SK-N-SH (cell line): ENCODE measurements at regions of chr17 and their contacts with region 1.

Region 1: DNA sequence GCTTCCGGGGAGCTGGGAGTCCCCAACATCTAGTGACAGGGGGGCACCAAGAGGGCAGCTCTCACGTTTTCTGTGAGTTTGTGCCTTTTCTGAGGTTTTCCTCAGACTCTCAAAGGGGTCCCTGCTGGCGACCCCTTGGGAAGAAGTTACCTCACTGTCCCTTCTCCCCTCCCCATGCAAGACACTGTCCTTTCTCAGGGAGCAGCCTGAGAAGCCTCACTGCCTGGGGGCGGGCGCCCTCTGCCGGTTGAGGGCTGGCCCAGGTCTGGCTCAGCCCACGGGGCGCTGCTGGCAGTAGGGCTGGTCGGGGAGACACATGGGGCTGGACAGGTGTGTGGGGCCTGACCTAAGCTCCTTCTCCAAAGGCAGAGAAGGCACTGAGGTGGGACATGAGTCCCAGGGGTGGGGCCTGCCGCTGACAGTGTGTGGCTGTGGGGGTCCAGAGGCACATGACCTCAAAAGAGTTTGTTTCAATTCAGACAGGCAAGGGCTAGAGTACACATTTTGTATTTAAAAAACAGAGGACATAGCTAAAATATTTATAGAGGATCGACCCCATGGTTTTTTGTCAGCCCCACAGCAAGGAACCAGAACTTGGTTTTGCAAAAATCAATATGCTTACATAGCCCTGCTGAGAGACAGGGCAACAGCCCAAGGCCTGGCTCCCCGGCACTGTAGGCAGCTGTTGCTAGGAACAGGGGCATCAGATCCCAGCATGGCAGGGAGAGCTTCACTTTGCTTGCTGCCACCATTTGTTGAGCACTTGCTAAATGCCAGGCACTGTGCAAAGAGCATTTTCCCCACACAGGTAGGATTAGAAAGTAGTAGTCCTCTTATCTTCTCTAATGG is 18.5 kb upstream of the ALDH3A1 start:
- DNase-seq: peak; percentile 87
- H3K4me3 ChIP-seq: peak overlapping the region in 1 of 2 experiments; percentile 46; a peak in 1 of 4 replicates
- H3K27ac ChIP-seq: no peak overlapping the region
- H3K4me1 ChIP-seq: peaks cover 2 to 3% of the 10 kb centered on the region in 2 experiments; a peak in 2 of 4 replicates
- H3K27me3 ChIP-seq: no peaks in the 10 kb centered on the region
- CTCF ChIP-seq: peak; percentile 96
- EP300 ChIP-seq: no peak
- RAD21 ChIP-seq: peak; percentile 95

Region 2: GRCh38 chr17:19362277-19363113 is 404.2 kb before region 1 on chr17 and contains the start of gene B9D1:
- CTCF ChIA-PET with region 1: interaction called, 35 read pairs
- POLR2A ChIA-PET with region 1: interaction called, 3 read pairs
- DNase-seq: peak; percentile 99
- H3K4me3 ChIP-seq: peak within 1 kb of the TSS; percentile 72 to 75
- H3K27ac ChIP-seq: peak within 1 kb of the TSS; percentile 83 to 88
- H3K4me1 ChIP-seq: peaks cover 13 to 32% of the 10 kb centered on the region in 2 experiments; a peak in 2 of 4 replicates
- H3K27me3 ChIP-seq: no peaks in the 10 kb centered on the region
- CTCF ChIP-seq: peak; percentile 89
- EP300 ChIP-seq: no peak; a peak in 1 of 4 replicates
- RAD21 ChIP-seq: peak; percentile 97
- polyA plus RNA-seq, gene B9D1: 75.0 and 81.6 TPM in 2 replicates

Region 3: DNA sequence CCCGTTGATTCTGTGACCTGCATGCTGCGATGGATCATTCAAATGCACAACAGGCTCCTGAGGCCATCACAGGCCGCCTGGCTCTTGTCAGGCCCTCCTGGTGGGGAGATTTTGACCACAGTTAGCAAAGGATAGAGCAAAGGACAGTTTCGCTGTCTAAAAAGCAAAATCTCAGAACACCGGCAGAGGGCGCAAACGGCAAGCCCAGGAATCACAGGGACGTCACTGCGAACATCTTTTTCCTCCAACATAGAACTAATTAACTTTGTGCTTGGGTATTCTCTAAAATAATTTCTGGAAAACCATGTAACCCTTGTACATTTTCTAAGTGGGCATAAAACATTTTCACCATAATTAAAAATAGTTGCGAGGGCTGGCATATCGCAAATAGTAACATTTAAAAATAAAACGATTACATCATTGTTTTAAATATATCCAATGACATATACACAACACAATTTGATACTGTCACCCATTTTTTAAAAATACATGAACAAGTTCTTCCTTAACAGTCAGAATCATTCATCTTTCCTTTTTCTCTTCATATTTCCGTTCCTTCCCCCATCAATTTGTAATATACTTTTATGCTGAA is 252.7 kb before region 1 on chr17:
- CTCF ChIA-PET with region 1: interaction called, 292 read pairs
- POLR2A ChIA-PET with region 1: no interaction called
- DNase-seq: peak; percentile 74
- H3K4me3 ChIP-seq: no peak overlapping the region; a peak in 1 of 4 replicates
- H3K27ac ChIP-seq: peak overlapping the region in 1 of 2 experiments; percentile 16; a peak in 1 of 4 replicates
- H3K4me1 ChIP-seq: peaks cover 0 to 5% of the 10 kb centered on the region in 2 experiments; a peak in 1 of 4 replicates
- H3K27me3 ChIP-seq: no peaks in the 10 kb centered on the region
- CTCF ChIP-seq: peak; percentile 97
- EP300 ChIP-seq: no peak
- RAD21 ChIP-seq: peak; percentile 98

Region 4: DNA sequence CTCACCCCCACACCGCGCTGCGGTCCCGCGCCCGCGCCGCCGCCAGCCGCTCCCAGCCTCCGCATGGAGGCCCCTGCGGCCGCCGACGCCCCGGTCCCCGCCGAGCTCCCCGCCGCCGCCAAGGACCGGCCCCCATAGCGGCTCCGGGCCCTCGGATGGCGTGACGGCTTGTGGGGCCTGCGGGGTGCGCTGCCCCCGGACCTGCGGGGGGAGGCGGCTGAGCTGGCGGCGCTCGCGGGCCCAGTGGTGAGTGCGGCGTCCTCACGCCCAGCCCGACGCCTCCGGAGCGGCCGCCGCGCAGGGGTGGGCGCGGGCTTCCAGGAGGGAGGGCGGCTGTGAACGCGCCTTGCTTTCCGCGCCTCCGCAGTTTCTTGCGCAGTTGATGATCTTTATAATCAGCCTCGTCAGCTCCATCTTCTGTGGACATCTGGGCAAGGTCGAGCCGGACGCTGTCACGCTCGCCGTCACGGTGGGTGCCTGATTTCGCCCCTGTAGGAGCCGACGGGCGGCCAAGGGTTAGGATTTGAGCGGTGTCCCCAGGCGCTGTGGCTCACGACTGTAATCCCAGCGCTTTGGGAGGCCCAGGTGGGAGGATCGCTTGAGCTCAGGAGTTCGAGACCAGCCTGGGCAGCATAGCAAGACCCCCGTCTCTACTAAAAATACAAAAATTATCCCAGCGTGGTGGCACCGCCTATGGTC is 186.6 kb before region 1 on chr17:
- CTCF ChIA-PET with region 1: interaction called, 20 read pairs
- POLR2A ChIA-PET with region 1: no interaction called
- DNase-seq: peak; percentile 78
- H3K4me3 ChIP-seq: peak overlapping the region; percentile 47 to 50
- H3K27ac ChIP-seq: no peak overlapping the region
- H3K4me1 ChIP-seq: peaks cover 0 to 16% of the 10 kb centered on the region in 2 experiments; a peak in 1 of 4 replicates
- H3K27me3 ChIP-seq: no peaks in the 10 kb centered on the region
- CTCF ChIP-seq: no peak
- EP300 ChIP-seq: no peak
- RAD21 ChIP-seq: no peak

Region 5: GRCh38 chr17:19703106-19703827 is 63.4 kb before region 1 on chr17:
- CTCF ChIA-PET with region 1: interaction called, 10 read pairs
- POLR2A ChIA-PET with region 1: no interaction called
- DNase-seq: no peak
- H3K4me3 ChIP-seq: no peak overlapping the region
- H3K27ac ChIP-seq: peak overlapping the region in 1 of 2 experiments; percentile 12; a peak in 1 of 4 replicates
- H3K4me1 ChIP-seq: peaks cover 8 to 16% of the 10 kb centered on the region in 2 experiments; a peak in 1 of 4 replicates
- H3K27me3 ChIP-seq: no peaks in the 10 kb centered on the region
- CTCF ChIP-seq: no peak
- EP300 ChIP-seq: no peak
- RAD21 ChIP-seq: no peak

Region 6: DNA sequence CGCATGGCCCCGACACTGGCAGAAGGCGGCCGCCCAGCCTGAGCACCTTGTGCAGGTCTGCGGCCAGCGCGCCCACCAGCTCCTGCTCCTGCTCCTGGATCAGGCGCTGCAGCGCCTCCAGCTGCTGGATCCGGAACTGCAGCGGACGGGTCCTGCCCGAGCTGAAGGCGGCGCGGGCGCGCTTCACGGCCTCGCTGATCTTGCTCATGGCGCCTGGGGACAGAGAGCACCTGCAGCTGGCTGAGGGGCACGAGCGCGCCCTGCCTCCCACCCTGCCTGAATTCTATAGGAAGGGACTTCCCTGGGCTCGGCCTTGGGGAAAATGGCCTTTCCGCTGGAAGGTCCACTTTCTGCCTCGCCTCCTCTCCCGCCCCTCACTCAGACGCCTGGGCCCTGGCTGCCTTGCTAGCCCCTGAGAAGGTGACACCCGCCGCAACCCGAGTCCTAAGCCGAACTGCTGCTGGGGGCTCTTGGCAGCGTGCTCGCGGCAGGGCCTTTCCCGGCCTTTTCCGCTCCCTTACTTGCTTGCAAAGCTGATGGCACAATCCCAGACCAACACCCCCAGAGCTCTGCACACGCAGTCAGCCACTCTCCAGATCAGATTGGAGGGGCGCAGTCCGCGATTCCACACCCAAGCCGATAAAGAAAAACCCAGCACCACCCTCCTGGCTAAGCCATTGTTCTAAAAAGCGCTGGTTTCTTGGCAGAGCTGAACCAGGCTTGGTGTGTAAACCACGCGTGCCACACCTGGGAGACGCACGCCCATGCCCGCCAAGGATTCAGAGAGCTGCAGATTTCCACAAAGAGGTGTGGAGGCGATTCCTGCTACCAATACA is 21.5 kb before region 1 on chr17:
- CTCF ChIA-PET with region 1: interaction called, 55 read pairs
- POLR2A ChIA-PET with region 1: interaction called, 5 read pairs
- DNase-seq: peak; percentile 95
- H3K4me3 ChIP-seq: peak overlapping the region in 1 of 2 experiments; percentile 47; a peak in 3 of 4 replicates
- H3K27ac ChIP-seq: no peak overlapping the region; a peak in 1 of 4 replicates
- H3K4me1 ChIP-seq: peaks cover 0 to 6% of the 10 kb centered on the region in 2 experiments; a peak in 1 of 4 replicates
- H3K27me3 ChIP-seq: no peaks in the 10 kb centered on the region
- CTCF ChIP-seq: peak; percentile 70
- EP300 ChIP-seq: no peak
- RAD21 ChIP-seq: peak; percentile 65

Region 7: GRCh38 chr17:19781488-19782458 is 15.1 kb after region 1 on chr17:
- CTCF ChIA-PET with region 1: interaction called, 63 read pairs
- POLR2A ChIA-PET with region 1: no interaction called
- DNase-seq: no peak
- H3K4me3 ChIP-seq: no peak overlapping the region
- H3K27ac ChIP-seq: no peak overlapping the region
- H3K4me1 ChIP-seq: no peaks in the 10 kb centered on the region
- H3K27me3 ChIP-seq: no peaks in the 10 kb centered on the region
- CTCF ChIP-seq: no peak
- EP300 ChIP-seq: no peak
- RAD21 ChIP-seq: no peak

Region 8: DNA sequence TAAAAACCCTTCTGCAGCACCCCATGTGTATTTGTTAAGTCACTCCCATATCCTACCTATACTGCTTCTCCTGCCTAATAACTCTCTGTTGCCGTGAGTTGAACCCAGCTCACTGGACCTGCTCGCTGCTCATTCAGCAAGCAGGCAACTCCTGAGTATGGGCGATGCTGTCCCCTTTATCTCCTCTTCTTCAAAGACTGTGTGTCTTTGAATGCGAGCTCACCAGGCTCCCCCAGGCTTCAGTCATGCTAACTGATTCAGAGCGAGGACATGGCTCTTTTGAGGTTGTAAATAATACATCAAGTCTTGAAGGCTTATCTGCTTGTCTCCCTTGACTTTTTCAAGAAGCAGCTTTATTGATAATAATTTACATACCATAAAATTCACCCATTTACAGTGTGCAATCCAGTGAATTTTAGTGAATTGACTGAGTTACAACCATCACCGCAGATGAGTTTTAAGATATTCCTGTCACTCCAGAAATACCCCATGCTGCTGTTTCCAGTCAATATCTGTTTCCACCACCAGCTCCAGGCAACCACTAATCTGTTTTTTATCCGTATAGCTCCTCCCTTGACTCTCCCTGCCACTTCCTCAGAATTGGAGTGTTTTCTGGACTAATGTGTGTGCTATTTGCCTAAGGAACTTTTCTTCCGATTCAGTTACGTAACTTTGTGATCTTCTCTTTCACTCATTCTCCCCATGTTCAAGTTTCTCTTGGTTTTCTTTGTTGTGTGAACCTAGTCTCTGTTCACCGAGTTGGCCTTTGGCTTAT is 374.7 kb after region 1 on chr17:
- CTCF ChIA-PET with region 1: no interaction called
- POLR2A ChIA-PET with region 1: no interaction called
- DNase-seq: no peak
- H3K4me3 ChIP-seq: no peak overlapping the region
- H3K27ac ChIP-seq: no peak overlapping the region
- H3K4me1 ChIP-seq: no peaks in the 10 kb centered on the region; a peak in 1 of 4 replicates
- H3K27me3 ChIP-seq: no peaks in the 10 kb centered on the region
- CTCF ChIP-seq: no peak
- EP300 ChIP-seq: no peak
- RAD21 ChIP-seq: no peak